GM10248 (cell line): ENCODE measurements at regions of chr2 and their contacts with region 1.

Region 1: DNA sequence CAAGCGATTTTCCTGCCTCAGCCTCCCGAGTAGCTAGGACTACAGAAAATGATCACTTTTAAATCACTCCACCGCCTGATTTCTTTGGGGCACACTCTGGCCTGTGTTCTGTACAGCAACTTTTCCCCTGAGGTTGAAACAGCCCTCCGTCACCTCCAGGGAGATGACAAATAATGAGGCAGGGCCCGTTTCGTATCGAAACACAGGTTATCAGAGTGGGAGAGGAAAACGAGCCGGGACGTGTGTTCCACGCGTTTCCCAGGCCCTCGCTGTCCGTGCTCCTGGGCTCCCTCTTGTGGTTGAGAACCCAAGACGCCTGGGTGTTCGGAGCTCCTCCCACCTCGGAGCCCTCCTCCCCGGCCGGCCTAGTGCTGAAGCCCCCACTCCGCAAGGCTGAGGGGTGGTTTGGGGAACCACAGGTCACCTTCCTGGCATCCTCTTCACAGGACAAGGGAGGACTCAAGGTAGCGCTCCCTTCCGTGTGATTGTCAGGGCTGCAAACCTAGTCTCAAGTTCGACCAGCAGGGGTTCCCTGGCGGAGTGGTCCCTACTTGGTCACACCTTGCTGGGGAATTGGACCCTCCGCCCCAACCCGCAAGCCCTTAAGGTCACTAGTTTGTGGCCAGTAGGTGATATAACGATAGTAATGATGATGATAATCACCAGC is 12.8 kb downstream of the ATP6V1B1 start:
- DNase-seq: peak; percentile 84
- CTCF ChIP-seq: peak; percentile 76

Region 2: DNA sequence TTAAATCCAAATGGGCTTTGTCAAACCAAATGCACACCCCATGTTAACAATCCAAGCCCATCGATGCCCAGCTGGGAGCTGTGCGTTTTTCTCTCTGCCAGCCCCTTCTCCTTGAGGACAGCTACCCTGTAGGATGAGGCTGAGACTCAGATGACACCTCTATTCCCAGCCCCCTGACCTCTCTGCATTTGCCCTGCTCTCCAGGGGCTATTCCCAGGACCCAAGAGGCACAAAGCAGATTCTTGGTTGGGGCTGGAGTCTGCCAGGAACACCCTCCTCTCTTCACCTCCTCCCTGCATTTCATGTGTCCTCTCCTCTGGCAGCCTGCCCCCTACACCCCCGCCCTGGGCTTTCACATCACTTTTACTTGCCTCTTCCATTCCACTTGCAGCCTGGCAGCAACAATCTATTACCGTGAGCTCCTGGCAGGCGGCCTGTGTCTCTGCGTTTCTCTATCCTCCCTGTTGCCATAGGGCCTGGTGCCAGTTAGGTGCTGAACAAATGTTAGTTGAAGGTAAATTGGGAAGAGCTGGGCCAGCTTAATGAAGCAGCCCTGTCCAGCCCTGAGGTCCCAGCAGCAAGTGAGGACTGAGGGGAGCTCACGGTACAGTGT is 232.2 kb before region 1 on chr2:
- CTCF ChIA-PET with region 1: no interaction called
- POLR2A ChIA-PET with region 1: no interaction called
- DNase-seq: no peak
- CTCF ChIP-seq: no peak

Region 3: GRCh38 chr2:70789304-70790135 is 158.9 kb before region 1 on chr2:
- CTCF ChIA-PET with region 1: interaction called, 11 read pairs
- POLR2A ChIA-PET with region 1: no interaction called
- DNase-seq: peak; percentile 69
- CTCF ChIP-seq: peak; percentile 78

Region 4: DNA sequence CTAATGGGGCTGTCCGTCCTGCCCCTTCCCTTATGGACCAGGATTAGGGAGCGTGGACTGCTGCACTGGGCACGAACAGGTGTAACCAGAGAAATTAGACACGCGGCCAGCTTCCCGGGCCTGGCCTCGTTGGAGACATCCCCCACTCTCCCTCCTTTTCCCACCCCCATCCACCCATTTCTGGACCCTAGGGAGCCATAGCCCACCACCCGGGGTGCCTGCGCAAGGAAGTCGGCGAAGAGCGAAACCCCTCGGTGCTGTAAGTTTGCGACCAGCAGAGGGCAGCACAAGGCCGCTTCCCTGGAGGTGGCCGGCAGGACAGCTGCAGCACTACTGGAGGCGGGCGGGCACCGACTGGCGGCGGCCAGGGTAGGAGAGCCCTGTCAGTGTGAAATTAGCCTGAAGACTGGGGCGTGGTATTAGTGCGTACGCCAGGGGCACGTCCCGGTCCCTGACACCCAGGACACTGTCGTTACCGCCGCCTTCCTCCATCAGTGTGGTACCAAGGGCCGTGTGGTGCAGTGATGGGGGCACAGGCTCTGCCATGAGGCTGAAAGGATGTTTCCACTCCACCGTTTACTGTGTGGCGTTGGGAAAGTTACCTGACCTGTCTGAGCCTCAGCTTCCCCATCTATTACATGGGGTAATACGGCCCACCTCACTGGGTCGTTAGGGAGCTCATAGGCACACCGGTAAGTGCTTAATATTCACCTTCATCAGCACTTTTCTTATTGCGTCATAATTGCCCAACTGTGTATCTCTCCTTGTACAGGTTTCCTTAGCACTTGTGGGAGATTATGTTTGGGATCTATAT is 76.9 kb before region 1 on chr2:
- CTCF ChIA-PET with region 1: interaction called, 87 read pairs
- POLR2A ChIA-PET with region 1: no interaction called
- DNase-seq: peak; percentile 84
- CTCF ChIP-seq: peak; percentile 96

Region 5: DNA sequence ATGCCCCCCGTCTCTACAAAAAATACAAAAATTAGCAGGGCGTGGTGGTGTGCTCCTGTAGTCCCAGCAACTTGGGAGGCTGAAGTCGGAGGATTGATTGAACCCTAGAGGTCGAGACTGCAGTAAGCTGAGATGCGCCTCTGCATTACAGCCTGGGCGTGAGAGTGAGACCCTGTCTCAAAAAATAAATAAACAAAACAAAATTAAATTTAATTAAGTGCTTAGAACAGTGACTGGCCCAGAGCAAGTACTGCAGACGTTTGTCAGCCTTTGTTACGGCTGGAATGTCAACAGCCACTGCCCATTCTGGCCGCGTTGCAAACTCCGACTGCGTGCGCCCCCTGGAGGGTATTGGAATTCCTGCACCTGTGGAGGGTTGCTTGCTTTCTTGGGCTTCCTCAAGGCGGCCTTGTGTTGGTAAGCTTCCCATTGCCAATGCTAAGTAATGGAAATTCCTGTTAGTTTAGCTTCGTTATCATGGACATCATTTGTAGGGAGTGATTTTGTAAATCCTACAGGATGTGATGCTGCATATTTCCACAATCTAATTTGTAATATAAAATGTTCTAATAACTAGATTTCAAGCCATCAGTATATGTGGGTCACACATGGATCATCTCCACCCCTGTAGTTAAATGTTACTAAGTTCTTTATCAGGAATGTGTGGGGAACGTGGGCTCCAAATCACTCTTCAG is 28.7 kb before region 1 on chr2:
- CTCF ChIA-PET with region 1: interaction called, 17 read pairs
- POLR2A ChIA-PET with region 1: no interaction called
- DNase-seq: peak; percentile 78
- CTCF ChIP-seq: peak; percentile 87

Region 6: DNA sequence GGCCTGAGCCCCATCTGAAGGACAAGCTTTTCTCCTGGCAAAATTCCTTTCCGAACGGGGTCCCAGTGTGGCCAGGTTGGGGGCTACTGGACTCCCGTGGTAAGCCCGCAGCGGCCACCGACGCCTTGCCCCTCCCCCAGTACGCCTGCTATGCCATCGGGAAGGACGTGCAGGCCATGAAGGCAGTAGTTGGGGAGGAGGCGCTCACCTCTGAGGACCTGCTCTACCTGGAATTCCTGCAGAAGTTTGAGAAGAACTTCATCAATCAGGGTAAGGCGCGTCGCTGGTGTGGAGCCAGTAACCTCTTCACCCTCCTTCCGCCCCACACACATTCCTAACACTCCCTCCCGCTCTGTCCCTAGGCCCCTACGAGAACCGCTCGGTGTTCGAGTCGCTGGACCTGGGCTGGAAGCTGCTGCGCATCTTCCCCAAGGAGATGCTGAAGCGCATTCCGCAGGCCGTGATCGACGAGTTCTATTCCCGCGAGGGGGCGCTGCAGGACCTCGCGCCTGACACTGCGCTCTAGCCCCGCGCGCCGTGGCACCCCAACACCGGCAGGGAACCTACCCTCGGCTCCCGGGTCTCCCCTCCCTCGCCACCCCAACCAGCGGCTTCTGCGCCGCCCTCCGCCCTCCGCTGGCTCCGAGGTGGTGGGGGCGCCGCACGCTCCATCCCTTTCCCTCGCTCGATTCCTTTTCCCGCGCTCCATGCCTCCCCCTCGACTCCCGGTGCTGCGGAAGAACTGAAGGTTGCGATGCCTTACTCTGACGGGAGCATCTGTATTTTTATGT is 16.3 kb after region 1 on chr2:
- CTCF ChIA-PET with region 1: interaction called, 43 read pairs
- POLR2A ChIA-PET with region 1: interaction called, 6 read pairs
- DNase-seq: peak; percentile 89
- CTCF ChIP-seq: peak; percentile 97